Activated CD8-positive, alpha-beta T cell treated with anti-CD3 and anti-CD28 coated beads for 36 hours (primary cell): ENCODE measurements at regions of chrX and their contacts with region 1.

Region 1: DNA sequence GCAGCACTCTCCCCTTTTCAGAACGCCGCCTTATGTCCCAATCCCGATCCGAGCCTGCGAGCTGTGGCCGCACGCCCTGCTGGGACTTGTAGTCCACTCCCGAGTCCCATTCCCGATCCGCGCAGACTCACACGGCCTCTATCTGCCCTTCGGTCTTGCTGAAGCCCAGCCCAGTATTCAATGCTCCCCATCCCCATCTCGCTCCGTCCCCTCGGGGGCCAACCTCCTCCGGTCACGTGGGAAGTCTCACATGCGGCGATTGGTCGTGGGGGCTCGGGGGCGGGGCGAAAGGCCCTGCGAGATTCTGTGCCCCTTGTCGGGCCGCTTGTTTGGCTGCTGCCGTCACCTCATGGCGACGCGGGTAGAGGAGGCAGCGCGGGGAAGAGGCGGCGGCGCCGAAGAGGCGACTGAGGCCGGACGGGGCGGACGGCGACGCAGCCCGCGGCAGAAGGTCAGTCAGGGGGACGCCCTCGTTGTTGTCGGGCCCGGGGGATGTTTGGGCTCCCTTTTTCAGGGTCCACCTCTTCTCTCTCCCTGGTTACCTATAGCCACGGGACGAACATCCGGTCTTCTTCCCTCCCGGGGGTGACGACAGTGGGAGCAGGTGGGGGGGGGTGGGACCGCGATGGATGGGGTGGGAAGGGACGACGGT is at the start of gene TXLNG:
- DNase-seq: peak; percentile 96
- ATAC-seq: peak; percentile 98
- H3K4me3 Mint-ChIP-seq: peak within 1 kb of the TSS; percentile 97
- H3K27ac Mint-ChIP-seq: peak within 1 kb of the TSS; percentile 86
- H3K4me1 Mint-ChIP-seq: peaks cover 9% of the 10 kb centered on the region
- H3K27me3 Mint-ChIP-seq: no peaks in the 10 kb centered on the region
- CTCF ChIP-seq: no peak
- total RNA-seq, gene TXLNG: 17.3 to 18.8 TPM

Region 2: DNA sequence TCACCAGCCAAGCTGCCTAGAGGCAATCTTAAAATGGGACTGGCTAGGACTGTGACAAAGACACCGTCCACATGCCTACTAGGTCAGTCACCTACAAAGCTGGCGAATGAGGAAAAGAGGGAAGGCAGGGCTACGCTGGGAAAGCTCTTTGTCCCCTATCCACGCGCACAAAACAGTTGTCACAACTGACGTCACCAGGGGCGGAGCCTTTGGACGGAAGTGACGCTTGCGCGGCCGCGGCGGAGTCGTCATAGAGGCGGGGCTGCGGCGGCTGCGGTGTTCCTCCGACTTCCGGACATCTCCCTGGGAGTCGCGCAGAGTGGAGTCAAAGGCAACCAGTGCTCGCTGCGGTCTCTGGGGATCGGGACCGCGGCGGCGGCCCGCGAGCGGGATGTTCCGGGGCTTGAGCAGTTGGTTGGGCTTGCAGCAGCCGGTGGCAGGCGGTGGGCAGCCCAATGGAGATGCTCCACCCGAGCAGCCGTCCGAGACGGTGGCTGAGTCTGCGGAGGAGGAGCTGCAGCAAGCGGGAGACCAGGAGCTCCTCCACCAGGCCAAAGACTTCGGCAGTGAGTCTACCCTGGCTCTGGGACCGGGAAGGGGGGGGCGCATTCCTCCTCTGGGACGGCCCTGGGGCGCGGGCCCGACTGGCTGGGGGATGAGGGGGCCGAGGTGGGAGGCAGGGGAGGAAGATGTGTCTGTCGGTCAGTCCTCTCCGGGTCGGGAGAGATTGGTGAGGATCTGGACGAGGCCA is 66.8 kb before region 1 on chrX and contains the start of gene SYAP1:
- CTCF ChIA-PET with region 1: no interaction called
- POLR2A ChIA-PET with region 1: no interaction called
- intact Hi-C with region 1: loop called (anchors 10 kb)
- DNase-seq: peak; percentile 92
- ATAC-seq: peak; percentile 92
- H3K4me3 Mint-ChIP-seq: peak within 1 kb of the TSS; percentile 78
- H3K27ac Mint-ChIP-seq: peak within 1 kb of the TSS; percentile 93
- H3K4me1 Mint-ChIP-seq: peaks cover 28% of the 10 kb centered on the region
- H3K27me3 Mint-ChIP-seq: no peaks in the 10 kb centered on the region
- CTCF ChIP-seq: no peak
- total RNA-seq, gene SYAP1: 18.2 to 20.4 TPM